ENCODE measurements at regions of chr9 and their contacts with region 1.

Region 1: DNA sequence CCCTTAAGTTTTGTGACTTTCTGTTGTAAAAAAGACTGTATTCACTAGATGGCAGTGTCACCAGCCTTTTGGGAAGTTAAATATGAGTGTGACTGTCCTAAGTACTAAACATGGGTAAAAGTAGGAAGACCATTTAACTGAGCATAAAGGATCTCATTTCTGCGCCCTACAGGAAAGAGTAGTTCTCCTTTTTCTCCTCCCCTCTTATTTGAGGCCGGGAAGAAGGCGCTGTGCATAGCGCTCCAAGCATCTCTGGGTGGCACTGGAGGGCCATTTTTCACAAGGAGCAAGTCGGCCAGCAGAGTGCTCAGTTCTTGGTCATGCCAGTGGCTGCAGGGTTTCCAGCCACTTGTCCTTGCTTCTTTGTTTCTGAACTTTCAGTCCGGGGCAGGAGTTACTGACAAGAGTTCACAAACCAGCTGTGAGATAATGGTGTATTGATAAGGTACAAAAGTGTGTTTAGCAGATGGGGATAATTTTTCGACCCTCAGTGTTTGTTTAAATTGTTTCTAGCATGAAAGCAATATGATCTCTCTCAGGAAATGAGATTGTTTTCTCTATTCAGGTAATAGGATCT is 227.6 kb upstream of the DMRT1 start:
- DNase-seq: peak; percentile 68
- H3K4me3 Mint-ChIP-seq: no peak overlapping the region
- H3K27ac Mint-ChIP-seq: no peak overlapping the region
- H3K4me1 Mint-ChIP-seq: peaks cover 5% of the 10 kb centered on the region
- H3K27me3 Mint-ChIP-seq: no peaks in the 10 kb centered on the region

Region 2: DNA sequence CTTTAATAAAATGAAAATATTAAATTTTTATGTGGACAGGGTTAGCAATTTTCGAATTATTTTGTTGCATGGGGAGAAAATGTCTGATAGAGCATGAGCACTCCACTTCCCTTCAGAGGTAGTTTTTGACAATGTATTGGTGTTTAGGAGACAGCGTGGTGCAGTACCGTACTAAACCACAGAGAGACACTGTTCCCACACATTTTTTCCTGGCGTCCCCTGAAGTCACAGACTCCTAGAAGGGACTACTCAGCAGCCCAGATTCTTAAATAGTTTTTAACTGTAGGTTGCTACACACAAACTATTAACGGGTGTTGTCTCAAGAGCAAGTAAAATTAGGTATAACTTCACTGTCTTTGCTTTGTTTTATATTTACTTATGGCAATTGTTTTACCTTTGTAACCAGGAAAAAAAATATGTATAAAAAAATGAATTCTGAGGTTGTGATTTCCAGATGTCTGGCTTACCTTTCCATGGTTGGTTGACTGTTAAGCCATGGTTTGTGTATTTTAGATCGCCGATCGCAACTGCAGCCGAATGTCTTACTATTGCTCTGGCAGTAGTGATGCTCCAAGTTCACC is 228.0 kb before region 1 on chr9:
- CTCF ChIA-PET with region 1: no interaction called
- intact Hi-C with region 1: loop called (anchors 2 kb)
- DNase-seq: peak; percentile 64
- H3K4me3 Mint-ChIP-seq: no peak overlapping the region
- H3K27ac Mint-ChIP-seq: no peak overlapping the region
- H3K4me1 Mint-ChIP-seq: no peaks in the 10 kb centered on the region
- H3K27me3 Mint-ChIP-seq: no peaks in the 10 kb centered on the region

Region 3: GRCh38 chr9:655875-656274 is 42.0 kb after region 1 on chr9:
- CTCF ChIA-PET with region 1: no interaction called
- intact Hi-C with region 1: no loop called
- DNase-seq: no peak
- H3K4me3 Mint-ChIP-seq: no peak overlapping the region
- H3K27ac Mint-ChIP-seq: no peak overlapping the region
- H3K4me1 Mint-ChIP-seq: peaks cover 38% of the 10 kb centered on the region
- H3K27me3 Mint-ChIP-seq: no peaks in the 10 kb centered on the region

Region 4: DNA sequence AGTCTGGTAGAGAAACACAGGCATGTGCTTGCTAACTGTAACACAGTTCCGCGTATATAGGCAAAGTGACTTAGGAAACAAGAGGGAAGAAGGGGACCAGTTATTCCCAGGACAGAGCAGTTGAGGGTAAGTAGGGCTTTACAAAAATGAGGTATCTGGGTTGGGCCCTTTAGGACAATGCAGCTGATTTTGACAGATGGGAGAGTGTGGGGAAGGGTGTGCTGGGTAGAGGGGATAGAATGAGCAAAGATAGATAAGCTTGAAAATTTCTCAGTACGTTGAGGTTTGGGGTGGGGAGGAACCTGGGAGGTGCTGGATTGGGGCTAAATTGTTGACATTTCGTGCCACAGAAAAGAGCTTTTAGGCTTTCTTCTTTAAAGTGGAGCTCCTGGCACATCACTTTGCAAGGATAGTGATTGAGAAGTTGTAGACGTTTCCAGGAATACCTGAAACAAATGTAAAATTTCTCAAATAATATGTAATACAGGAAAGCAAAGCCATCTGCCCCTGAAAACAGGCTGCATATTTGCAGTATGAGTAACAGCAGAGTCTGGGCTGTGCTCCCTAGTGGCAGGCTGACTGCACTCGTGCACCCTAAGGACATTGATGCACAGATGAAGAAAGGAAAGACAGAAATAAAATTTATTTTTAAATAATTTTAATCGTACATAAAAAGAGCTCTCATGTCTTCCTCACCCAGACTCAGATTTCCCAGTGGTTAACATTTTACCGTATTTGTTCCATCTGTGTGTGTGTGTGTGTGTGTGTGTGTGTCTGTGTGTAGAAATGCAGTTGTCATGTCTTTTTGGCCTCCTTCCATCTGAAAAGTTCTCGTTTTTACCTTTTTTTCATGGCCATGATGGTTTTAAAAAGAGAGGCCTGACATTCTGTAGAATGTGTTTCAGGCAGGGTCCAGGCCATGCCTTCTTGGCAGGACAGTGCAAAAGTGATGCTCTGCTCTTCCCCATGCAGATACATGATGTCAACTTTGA is 82.8 kb after region 1 on chr9:
- CTCF ChIA-PET with region 1: no interaction called
- intact Hi-C with region 1: no loop called
- DNase-seq: no peak
- H3K4me3 Mint-ChIP-seq: no peak overlapping the region
- H3K27ac Mint-ChIP-seq: no peak overlapping the region
- H3K4me1 Mint-ChIP-seq: peaks cover 6% of the 10 kb centered on the region
- H3K27me3 Mint-ChIP-seq: no peaks in the 10 kb centered on the region

Region 5: GRCh38 chr9:763692-764524 is 150.0 kb after region 1 on chr9:
- CTCF ChIA-PET with region 1: interaction called, 28 read pairs
- intact Hi-C with region 1: loop called (anchors 1 kb)
- DNase-seq: peak; percentile 62
- H3K4me3 Mint-ChIP-seq: no peak overlapping the region
- H3K27ac Mint-ChIP-seq: no peak overlapping the region
- H3K4me1 Mint-ChIP-seq: no peaks in the 10 kb centered on the region
- H3K27me3 Mint-ChIP-seq: no peaks in the 10 kb centered on the region

Region 6: DNA sequence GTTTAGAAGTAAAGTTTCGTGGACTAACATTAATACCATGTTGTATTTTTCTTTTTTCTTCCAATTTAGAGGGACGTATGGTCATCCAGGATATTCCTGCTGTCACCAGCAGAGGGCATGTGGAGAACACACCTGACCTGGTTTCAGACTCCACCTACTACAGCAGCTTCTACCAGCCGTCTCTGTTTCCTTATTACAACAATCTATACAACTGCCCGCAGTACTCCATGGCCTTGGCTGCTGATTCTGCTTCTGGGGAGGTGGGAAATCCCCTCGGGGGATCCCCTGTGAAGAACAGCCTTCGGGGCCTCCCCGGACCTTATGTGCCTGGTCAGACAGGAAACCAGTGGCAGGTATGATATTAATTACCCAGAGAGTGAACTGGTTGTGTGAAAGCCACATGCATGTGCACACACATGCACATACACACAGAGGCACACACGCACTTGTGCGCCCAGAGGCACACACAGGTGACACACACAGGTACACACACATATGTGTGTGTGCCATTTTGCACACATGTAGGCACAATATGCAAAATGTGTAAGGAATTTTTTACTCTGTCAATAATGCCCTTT is 280.1 kb after region 1 on chr9:
- CTCF ChIA-PET with region 1: no interaction called
- intact Hi-C with region 1: loop called (anchors 5 kb)
- DNase-seq: peak; percentile 84
- H3K4me3 Mint-ChIP-seq: no peak overlapping the region
- H3K27ac Mint-ChIP-seq: no peak overlapping the region
- H3K4me1 Mint-ChIP-seq: peaks cover 11% of the 10 kb centered on the region
- H3K27me3 Mint-ChIP-seq: peaks cover 6% of the 10 kb centered on the region